ENCODE measurements at regions of chr16 and their contacts with region 1.

Region 1: DNA sequence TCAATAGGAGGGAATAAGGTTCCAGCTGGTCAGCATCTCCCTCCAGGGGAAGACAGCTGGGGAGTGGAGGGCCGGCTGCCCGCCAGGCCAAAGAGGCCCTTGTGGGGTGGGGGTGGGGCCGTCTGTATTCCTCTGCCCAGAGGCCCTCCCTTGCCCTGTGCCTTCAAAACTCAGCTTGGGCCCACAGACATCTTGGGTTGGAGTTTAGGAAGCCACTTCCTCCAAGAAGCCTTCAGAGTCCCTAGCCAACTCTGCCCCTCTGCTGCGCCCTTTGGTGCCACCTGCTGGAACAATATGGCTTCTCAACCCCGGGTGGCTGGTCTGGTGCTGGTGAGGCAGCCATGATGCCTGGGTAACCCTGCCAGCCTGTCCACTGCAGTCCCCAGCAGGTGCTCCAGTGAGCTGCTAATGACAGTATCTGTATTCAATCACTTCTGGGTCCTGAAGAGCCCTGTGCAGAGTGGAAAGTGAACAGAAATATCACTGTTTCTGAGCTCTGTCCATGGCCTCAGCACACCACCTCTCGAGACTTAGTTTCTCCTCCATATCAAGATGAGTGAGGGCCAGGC is 16.7 kb downstream of the HSD11B2 start:
- DNase-seq: peak; percentile 49
- ATAC-seq: peak; percentile 2; the same call in 1 of the 3 replicates
- H3K4me3 ChIP-seq: no peak overlapping the region
- H3K27ac ChIP-seq: peak overlapping the region; percentile 88
- H3K4me1 ChIP-seq: peaks cover 67% of the 10 kb centered on the region
- H3K27me3 ChIP-seq: no peaks in the 10 kb centered on the region
- CTCF ChIP-seq: peak; percentile 93
- EP300 ChIP-seq: no peak
- POLR2A ChIP-seq: no peak
- RAD21 ChIP-seq: peak; percentile 76

Region 2: DNA sequence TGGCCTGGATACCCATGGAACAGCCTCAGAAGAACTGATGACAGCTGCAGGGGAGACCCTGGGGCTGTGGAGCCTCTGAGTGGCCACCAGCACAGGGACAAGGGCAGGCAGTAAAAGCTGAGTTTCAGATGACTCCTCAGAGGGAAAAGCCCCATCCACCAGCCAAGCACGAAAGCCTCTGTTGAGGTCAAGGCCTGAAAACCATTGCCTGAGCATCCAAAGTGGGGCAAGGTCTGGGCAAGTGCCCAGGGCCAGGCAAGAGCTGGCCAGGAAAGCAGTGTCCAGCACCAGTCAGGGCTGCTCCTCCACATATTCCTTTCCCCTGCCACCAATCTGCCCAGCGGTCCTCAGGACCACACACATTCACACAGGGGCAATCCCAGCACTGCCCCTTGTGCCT is 17.0 kb after region 1 on chr16:
- CTCF ChIA-PET with region 1: interaction called, 9 read pairs
- POLR2A ChIA-PET with region 1: interaction called, 5 read pairs
- in situ Hi-C with region 1: no loop called
- intact Hi-C with region 1: loop called (anchors 2 kb)
- DNase-seq: no peak
- ATAC-seq: no peak
- H3K4me3 ChIP-seq: no peak overlapping the region
- H3K27ac ChIP-seq: no peak overlapping the region
- H3K4me1 ChIP-seq: peaks cover 14% of the 10 kb centered on the region
- H3K27me3 ChIP-seq: no peaks in the 10 kb centered on the region
- CTCF ChIP-seq: no peak
- EP300 ChIP-seq: no peak
- POLR2A ChIP-seq: no peak
- RAD21 ChIP-seq: no peak